ENCODE measurements at regions of chr18 and their contacts with region 1.

Region 1: DNA sequence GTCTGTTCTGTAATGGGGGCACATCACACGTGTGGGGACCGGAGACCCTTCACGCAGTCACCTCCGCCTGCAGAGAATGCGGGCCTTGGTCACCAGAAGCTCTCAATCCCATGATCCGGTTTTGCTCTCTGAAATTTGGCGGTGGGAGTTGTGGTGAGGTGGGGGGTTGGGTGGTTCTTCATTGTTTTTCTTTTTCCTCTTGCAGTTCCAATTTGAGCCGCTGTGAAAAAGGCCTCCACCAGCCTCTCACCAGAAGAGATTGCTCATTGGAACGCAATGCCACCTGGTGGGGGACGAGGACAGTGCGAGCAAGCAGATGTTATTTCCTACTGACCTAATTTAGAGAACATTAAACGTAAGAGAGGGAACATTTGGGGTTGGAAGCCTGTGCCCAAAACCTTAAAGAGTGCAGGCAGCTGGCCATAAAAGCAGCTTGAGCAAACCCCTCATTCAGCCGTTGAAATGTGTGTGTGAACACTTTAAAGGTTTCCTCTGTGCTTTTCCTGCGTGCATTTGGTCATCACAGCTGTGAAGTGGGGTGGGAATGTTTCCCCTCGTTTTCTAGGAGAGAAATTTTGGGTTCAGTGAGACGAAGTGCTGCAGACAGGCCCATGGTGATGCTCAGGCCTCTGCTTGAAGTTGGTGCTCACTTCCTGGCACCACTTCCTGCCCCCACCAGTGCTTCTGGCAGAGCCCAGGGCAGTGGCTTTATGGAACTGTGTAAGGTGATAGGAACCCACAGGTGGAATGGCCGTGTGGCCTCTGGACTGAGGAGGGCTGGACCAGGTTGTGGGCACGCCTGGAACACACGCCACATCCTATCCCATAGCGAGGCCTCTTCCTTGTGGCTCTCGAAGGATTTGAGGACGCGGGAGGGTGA is 61.7 kb downstream of the ZCCHC2 start:
- DNase-seq: peak; percentile 73 to 88 (median 82)
- ATAC-seq: peak; percentile 85 to 97 (median 97)
- H3K4me3 ChIP-seq: no peak overlapping the region
- H3K27ac ChIP-seq: no peak overlapping the region
- H3K4me1 ChIP-seq: no peaks in the 10 kb centered on the region
- H3K27me3 ChIP-seq: no peaks in the 10 kb centered on the region
- CTCF ChIP-seq: peak; percentile 90 to 94 (median 92)

Region 2: DNA sequence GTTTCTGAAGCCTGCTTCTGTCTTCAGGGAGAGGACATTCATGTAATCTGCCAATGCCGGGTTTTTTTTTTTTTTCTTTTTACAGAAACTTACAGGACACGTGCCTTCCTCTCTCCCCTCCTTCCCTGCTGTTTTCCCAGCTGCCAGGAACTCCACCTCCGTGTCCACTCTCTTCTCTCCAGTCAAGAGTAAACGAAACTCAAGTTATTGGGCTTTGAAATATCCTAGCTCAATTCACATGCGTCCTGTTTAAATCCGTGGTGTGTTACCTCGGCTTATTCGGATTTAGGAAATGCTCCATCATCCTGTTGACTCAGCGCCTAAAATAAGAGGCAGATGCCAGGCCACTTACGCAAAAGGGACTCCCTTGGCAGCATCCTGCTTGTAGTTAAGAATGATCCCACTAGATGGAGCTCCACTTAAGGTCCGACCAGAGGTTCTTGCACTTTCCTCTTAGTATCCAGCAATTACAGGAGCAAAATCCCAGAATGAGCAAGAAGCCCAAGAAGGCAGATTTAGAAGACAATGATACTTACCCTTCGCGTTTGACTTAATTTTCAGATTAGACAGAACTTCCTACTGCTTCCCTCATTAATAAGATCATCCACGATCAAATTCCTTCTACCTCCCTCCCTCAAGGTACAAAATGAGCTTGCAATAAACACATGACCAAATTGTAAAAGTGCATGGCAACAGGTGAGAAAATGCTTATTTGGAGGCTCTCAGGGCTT is 158.9 kb before region 1 on chr18:
- intact Hi-C with region 1: loop called in 1 of 3 experiments (anchors 5 kb)
- DNase-seq: peak in 4 of 6 donors; percentile 47 to 89 (median 76)
- ATAC-seq: peak; percentile 88 to 96 (median 96)
- H3K4me3 ChIP-seq: peak overlapping the region in 2 of 4 donors; percentile 5 to 33
- H3K27ac ChIP-seq: peak overlapping the region in 2 of 4 donors; percentile 59 to 61
- H3K4me1 ChIP-seq: peaks cover 0 to 15% (median 0%) of the 10 kb centered on the region in 3 donors
- H3K27me3 ChIP-seq: no peaks in the 10 kb centered on the region
- CTCF ChIP-seq: peak; percentile 65 to 83 (median 72)

Measured in pancreas (tissue), 10 donors.